CD8-positive, alpha-beta memory T cell (primary cell): ENCODE measurements at regions of chr1 and their contacts with region 1.

Region 1: GRCh38 chr1:85240174-85240601 is 19.3 kb downstream of the C1orf52 start:
- DNase-seq: no peak
- H3K4me3 ChIP-seq: no peak overlapping the region
- H3K4me3 Mint-ChIP-seq: no peak overlapping the region
- H3K27ac ChIP-seq: no peak overlapping the region
- H3K27ac Mint-ChIP-seq: peak overlapping the region in 2 of 8 donors; percentile 48 to 67
- H3K4me1 ChIP-seq: peaks cover 7% of the 10 kb centered on the region
- H3K4me1 Mint-ChIP-seq: peaks cover 0 to 12% (median 10%) of the 10 kb centered on the region in 3 donors
- H3K27me3 ChIP-seq: no peaks in the 10 kb centered on the region
- H3K27me3 Mint-ChIP-seq: peaks cover 4 to 24% of the 10 kb centered on the region in 2 donors

Region 2: GRCh38 chr1:84344286-84344685 is 895.9 kb before region 1 on chr1:
- CTCF ChIA-PET with region 1: no interaction called
- POLR2A ChIA-PET with region 1: interaction called, 13 read pairs
- DNase-seq: no peak
- H3K4me3 ChIP-seq: no peak overlapping the region
- H3K4me3 Mint-ChIP-seq: no peak overlapping the region
- H3K27ac ChIP-seq: no peak overlapping the region
- H3K27ac Mint-ChIP-seq: no peak overlapping the region
- H3K4me1 ChIP-seq: no peaks in the 10 kb centered on the region
- H3K4me1 Mint-ChIP-seq: no peaks in the 10 kb centered on the region
- H3K27me3 ChIP-seq: peaks cover 3% of the 10 kb centered on the region
- H3K27me3 Mint-ChIP-seq: peaks cover 5 to 7% of the 10 kb centered on the region in 2 donors

Region 3: GRCh38 chr1:85278846-85279314 is 38.7 kb after region 1 on chr1:
- CTCF ChIA-PET with region 1: no interaction called
- POLR2A ChIA-PET with region 1: no interaction called
- DNase-seq: no peak
- H3K4me3 ChIP-seq: no peak overlapping the region
- H3K4me3 Mint-ChIP-seq: peak overlapping the region in 3 of 7 donors; percentile 6 to 58 (median 29)
- H3K27ac ChIP-seq: peak overlapping the region; percentile 25
- H3K27ac Mint-ChIP-seq: peak overlapping the region; percentile 0 to 88 (median 24)
- H3K4me1 ChIP-seq: peaks cover 28% of the 10 kb centered on the region
- H3K4me1 Mint-ChIP-seq: peaks cover 31 to 38% (median 34%) of the 10 kb centered on the region in 3 donors
- H3K27me3 ChIP-seq: no peaks in the 10 kb centered on the region
- H3K27me3 Mint-ChIP-seq: peaks cover 6 to 12% of the 10 kb centered on the region in 2 donors